Aorta (tissue), 5 donors: ENCODE measurements at regions of chr1 and their contacts with region 1.

Region 1: GRCh38 chr1:109532365-109533136 is 7.1 kb upstream of the GPR61 start:
- DNase-seq: peak; percentile 91 to 95
- ATAC-seq: peak; percentile 92
- H3K4me3 ChIP-seq: no peak overlapping the region
- H3K27ac ChIP-seq: peak overlapping the region in 1 of 2 donors; percentile 25
- H3K4me1 ChIP-seq: no peaks in the 10 kb centered on the region
- H3K27me3 ChIP-seq: no peaks in the 10 kb centered on the region

Region 2: GRCh38 chr1:109263597-109264398 is 268.8 kb before region 1 on chr1:
- intact Hi-C with region 1: loop called in 1 of 2 experiments (anchors 5 kb)
- DNase-seq: peak; percentile 87 to 94
- ATAC-seq: peak; percentile 86
- H3K4me3 ChIP-seq: no peak overlapping the region
- H3K27ac ChIP-seq: no peak overlapping the region
- H3K4me1 ChIP-seq: no peaks in the 10 kb centered on the region
- H3K27me3 ChIP-seq: no peaks in the 10 kb centered on the region

Region 3: DNA sequence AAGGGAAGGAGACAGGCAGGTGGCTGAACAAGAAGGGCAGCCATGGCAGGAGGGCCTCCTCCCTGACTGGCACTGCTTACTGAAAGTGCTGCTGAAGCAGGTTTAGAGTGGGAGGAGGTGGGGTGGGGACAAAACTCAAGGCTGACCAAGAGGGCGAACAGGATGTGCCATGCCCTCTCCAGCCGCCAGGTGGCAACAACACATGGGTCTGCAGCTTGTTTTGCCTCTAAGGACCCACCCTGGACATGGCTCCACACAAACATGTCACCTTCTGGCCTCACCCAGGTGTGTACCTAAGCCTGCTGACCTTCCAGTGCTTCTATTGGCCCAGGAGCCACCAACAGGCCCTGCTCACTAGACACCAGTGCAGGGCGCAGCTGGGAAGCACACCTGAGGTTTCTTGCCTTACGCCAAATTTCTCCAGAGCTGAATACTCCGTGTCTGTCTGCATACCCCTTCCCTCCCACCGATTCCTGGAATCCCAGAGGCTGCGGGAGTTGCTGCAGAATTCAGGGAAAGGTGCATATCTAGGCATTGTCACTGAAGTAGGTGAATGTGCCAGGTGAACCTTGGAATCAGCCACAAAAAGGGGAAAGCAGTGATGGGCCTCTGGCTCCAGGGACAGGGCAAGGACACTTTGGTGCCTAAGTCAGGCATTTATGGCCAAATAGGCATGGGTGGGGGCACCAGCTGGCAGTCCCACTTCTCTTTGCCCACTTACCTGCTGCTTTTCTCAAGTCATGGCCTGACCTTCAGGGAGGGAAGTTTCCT is 254.9 kb before region 1 on chr1:
- intact Hi-C with region 1: loop called in 1 of 2 experiments (anchors 10 kb)
- DNase-seq: peak; percentile 84 to 94
- ATAC-seq: peak; percentile 81
- H3K4me3 ChIP-seq: no peak overlapping the region
- H3K27ac ChIP-seq: no peak overlapping the region
- H3K4me1 ChIP-seq: no peaks in the 10 kb centered on the region
- H3K27me3 ChIP-seq: no peaks in the 10 kb centered on the region

Region 4: GRCh38 chr1:109426278-109427170 is 106.0 kb before region 1 on chr1 and contains the start of gene PSMA5:
- intact Hi-C with region 1: loop called (anchors 5 to 10 kb)
- DNase-seq: peak; percentile 97 to 99
- ATAC-seq: peak; percentile 99
- H3K4me3 ChIP-seq: peak within 1 kb of the TSS; percentile 72 to 93
- H3K27ac ChIP-seq: peak within 1 kb of the TSS; percentile 46 to 58
- H3K4me1 ChIP-seq: no peaks in the 10 kb centered on the region
- H3K27me3 ChIP-seq: no peaks in the 10 kb centered on the region
- total RNA-seq, gene PSMA5: 37.4 to 49.9 TPM

Region 5: GRCh38 chr1:109477821-109478220 is 54.7 kb before region 1 on chr1:
- intact Hi-C with region 1: no loop called
- DNase-seq: no peak
- ATAC-seq: no peak
- H3K4me3 ChIP-seq: no peak overlapping the region
- H3K27ac ChIP-seq: no peak overlapping the region
- H3K4me1 ChIP-seq: no peaks in the 10 kb centered on the region
- H3K27me3 ChIP-seq: no peaks in the 10 kb centered on the region

Region 6: GRCh38 chr1:109490029-109490933 is 42.3 kb before region 1 on chr1:
- intact Hi-C with region 1: loop called (anchors 2 kb)
- DNase-seq: peak in 1 of 2 donors; percentile 79
- ATAC-seq: peak; percentile 47
- H3K4me3 ChIP-seq: no peak overlapping the region
- H3K27ac ChIP-seq: no peak overlapping the region
- H3K4me1 ChIP-seq: no peaks in the 10 kb centered on the region
- H3K27me3 ChIP-seq: no peaks in the 10 kb centered on the region

Region 7: DNA sequence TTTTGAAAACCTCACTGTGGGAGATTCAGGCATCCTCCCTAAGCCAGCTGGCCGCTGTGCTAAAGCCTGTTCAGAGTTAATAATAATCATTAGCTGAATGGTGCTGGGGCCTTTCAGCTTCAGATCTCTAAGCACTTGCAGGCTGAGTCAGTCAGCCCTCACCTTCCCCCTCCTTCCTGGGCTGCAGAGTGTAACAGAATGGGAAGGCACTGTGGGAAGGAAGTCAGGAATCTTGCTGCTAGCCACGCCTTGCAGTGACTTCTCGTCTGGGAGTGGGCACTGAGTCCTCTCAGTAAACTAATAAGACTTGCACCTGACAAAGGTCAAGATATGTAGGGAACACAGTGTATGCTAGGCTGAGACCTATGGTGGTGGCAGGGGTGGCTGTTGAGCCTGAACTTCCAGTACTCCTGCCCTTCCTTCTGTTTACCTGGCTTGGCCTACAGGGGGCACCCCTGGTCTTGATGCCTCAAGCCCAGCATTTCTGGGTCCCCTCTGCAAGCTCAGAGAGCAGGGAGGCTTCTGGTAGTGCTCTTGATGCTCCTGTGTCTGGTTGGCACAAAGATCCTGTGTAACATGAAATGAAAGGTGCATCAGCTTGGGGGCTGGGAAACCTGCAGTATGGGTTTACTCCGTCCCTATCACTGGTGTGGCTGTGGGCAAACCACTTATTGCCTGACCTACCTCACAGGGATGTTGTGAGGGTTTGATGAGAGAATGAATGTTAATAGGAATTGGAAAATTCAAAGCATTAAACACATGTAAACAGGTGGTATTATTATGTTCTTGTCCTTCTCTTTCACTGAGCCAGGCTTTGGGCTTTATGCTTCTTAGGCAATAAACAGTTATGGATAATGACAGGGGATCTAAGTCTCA is 32.7 kb before region 1 on chr1:
- intact Hi-C with region 1: loop called in 1 of 2 experiments (anchors 2 kb)
- DNase-seq: no peak
- ATAC-seq: no peak
- H3K4me3 ChIP-seq: no peak overlapping the region
- H3K27ac ChIP-seq: peak overlapping the region in 1 of 2 donors; percentile 86
- H3K4me1 ChIP-seq: peaks cover 0 to 3% of the 10 kb centered on the region in 2 donors
- H3K27me3 ChIP-seq: no peaks in the 10 kb centered on the region